ENCODE measurements at regions of chr3 and their contacts with region 1.

Region 1: GRCh38 chr3:46222435-46223161 is 14.5 kb upstream of the CCR1 start:
- DNase-seq: no peak
- ATAC-seq: peak; percentile 61
- H3K4me3 Mint-ChIP-seq: peak overlapping the region; percentile 3
- H3K27ac Mint-ChIP-seq: peak overlapping the region; percentile 36
- H3K4me1 Mint-ChIP-seq: peaks cover 51% of the 10 kb centered on the region
- H3K27me3 Mint-ChIP-seq: no peaks in the 10 kb centered on the region
- CTCF ChIP-seq: no peak

Region 2: DNA sequence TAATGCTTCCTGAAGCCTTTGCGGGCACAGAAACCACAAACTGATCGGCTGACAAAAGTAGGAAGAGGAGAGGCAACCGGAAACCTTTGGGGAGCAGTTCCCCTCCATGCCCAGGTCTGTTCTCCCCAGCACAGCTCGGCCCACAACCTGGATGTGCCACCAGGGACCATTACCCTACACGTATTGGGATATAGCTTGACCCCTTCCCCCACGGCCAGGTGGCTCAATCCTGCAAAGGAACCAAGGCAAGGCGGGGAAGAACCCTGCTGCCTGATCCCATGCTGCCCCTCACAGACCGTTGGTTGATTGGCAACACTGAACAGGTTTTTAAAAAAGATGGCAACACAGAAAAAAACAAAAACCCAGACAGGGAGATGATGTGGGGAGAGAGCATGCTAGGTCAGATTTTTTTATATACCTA is 1903.7 kb before region 1 on chr3:
- CTCF ChIA-PET with region 1: no interaction called
- POLR2A ChIA-PET with region 1: no interaction called
- intact Hi-C with region 1: no loop called
- DNase-seq: no peak
- ATAC-seq: no peak
- H3K4me3 Mint-ChIP-seq: no peak overlapping the region
- H3K27ac Mint-ChIP-seq: no peak overlapping the region
- H3K4me1 Mint-ChIP-seq: no peaks in the 10 kb centered on the region
- H3K27me3 Mint-ChIP-seq: peaks cover 7% of the 10 kb centered on the region
- CTCF ChIP-seq: no peak

Region 3: DNA sequence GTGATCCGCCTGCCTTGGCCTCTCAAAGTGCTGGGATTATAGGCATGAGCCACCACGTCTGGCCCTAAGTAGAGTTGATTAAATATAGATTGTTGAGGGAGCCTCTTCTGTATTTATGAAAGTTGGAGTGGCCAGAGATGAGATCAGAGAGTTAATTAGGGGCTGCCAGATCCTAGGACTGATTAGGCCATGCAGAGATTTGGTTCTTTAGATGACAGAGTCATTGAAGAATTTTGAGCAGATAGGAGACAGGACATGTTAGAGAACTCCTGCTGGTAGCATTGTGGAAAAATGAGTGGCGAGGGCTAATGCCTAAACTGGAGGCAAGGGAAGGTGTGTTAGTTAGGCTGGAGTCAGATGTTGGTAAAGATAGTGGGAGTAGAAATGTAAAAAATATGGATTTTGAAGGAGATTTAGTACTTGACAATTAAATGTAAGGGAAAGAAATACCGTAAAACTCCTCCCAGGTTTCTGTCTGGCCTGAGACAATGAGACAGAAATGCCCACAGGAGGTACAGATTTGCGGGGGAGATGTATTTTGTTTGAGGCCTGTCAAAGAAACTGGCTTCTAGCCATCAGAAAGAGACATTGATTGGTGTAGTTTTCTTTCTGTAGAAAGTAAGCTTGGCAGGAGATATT is 510.0 kb before region 1 on chr3:
- CTCF ChIA-PET with region 1: no interaction called
- POLR2A ChIA-PET with region 1: no interaction called
- intact Hi-C with region 1: no loop called
- DNase-seq: no peak
- ATAC-seq: no peak
- H3K4me3 Mint-ChIP-seq: no peak overlapping the region
- H3K27ac Mint-ChIP-seq: no peak overlapping the region
- H3K4me1 Mint-ChIP-seq: no peaks in the 10 kb centered on the region
- H3K27me3 Mint-ChIP-seq: no peaks in the 10 kb centered on the region
- CTCF ChIP-seq: no peak

Region 4: GRCh38 chr3:46186471-46187340 is 35.9 kb before region 1 on chr3:
- CTCF ChIA-PET with region 1: no interaction called
- POLR2A ChIA-PET with region 1: no interaction called
- intact Hi-C with region 1: loop called (anchors 5 kb)
- DNase-seq: no peak
- ATAC-seq: peak; percentile 90
- H3K4me3 Mint-ChIP-seq: peak overlapping the region; percentile 52
- H3K27ac Mint-ChIP-seq: peak overlapping the region; percentile 68
- H3K4me1 Mint-ChIP-seq: peaks cover 58% of the 10 kb centered on the region
- H3K27me3 Mint-ChIP-seq: no peaks in the 10 kb centered on the region
- CTCF ChIP-seq: no peak

Region 5: GRCh38 chr3:46469680-46470357 is 247.2 kb after region 1 on chr3:
- CTCF ChIA-PET with region 1: no interaction called
- POLR2A ChIA-PET with region 1: no interaction called
- intact Hi-C with region 1: no loop called
- DNase-seq: no peak
- ATAC-seq: no peak
- H3K4me3 Mint-ChIP-seq: no peak overlapping the region
- H3K27ac Mint-ChIP-seq: no peak overlapping the region
- H3K4me1 Mint-ChIP-seq: no peaks in the 10 kb centered on the region
- H3K27me3 Mint-ChIP-seq: peaks cover 12% of the 10 kb centered on the region
- CTCF ChIP-seq: no peak